ENCODE measurements at regions of chr5 and their contacts with region 1.

Region 1: DNA sequence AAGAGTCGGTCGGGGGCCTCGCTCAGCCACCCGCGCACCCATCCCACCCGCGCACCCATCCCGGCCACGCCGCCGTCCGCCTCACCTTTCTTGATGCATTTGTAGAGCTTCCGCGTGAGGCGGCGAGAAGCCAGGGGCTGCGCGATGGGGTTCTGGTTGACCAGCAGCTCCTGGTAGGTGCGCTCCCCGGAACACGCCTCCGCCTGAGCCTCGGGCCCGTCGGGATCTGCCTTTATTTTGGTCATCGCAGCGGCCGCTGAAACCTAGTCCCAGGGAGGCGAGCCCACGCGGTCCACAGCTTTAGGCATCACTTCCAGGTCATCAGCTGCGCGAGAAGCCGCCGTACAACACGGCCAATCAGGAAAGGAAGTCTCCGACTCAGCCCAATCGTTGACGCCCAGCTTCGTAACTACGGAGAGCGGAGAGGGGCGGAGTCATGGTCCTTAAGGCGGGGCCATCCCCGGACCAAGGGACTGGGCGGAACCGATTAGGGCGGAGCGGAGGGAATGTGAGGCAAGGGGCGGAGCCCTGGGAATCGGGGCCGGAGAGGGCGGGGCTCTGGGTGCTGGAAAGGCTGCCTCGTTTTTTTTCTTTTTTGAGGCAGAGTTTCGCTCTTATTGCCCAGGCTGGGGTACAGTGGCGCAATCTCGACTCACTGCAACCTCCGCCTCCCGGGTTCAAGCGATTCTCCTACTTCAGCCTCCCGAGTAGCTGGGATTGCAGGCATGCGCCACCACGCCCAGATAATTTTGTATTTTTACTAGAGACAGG is at the start of gene NHP2:
- DNase-seq: peak; percentile 99
- ATAC-seq: peak; percentile 96
- H3K4me3 Mint-ChIP-seq: peak within 1 kb of the TSS; percentile 94
- H3K27ac Mint-ChIP-seq: peak within 1 kb of the TSS; percentile 94
- H3K4me1 Mint-ChIP-seq: peaks cover 13% of the 10 kb centered on the region
- H3K27me3 Mint-ChIP-seq: no peaks in the 10 kb centered on the region
- CTCF ChIP-seq: no peak
- total RNA-seq, gene NHP2: 263 to 269 TPM (median 264 TPM) in 3 replicates

Region 2: DNA sequence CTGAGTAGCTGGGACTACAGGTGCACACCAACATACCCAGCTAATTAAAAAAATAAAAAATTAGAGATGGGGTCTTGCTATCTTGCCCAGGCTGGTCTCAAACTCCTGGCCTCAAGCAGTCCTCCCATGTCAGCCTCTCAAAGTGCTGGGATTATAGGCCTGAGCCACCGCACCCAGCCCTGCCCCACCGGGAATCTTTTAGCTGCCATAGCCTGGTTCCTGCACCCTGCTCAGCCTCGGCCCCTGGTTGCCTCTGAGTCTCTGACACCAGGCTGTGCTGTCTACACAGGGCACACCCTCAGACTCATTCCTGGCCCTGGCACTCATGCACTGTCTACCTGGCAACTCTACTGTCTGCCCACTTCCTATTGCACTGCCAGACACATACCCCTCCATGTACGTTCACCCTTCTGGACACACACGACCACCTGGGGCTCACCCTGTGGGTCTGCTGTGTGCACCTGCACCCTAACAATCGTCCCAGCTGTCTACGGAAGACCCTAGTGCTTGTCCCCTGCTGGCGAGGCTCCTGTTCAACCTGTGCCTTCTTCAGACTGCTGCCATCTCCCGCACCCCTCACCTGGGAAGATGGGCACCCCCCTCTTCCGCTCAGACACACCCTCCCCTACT is 159.1 kb before region 1 on chr5:
- CTCF ChIA-PET with region 1: no interaction called
- POLR2A ChIA-PET with region 1: no interaction called
- DNase-seq: no peak
- ATAC-seq: no peak
- H3K4me3 Mint-ChIP-seq: no peak overlapping the region
- H3K27ac Mint-ChIP-seq: no peak overlapping the region; the same call in 1 of the 2 replicates
- H3K4me1 Mint-ChIP-seq: peaks cover 13% of the 10 kb centered on the region
- H3K27me3 Mint-ChIP-seq: peaks cover 5% of the 10 kb centered on the region; the same call in 1 of the 2 replicates
- CTCF ChIP-seq: no peak

Region 3: GRCh38 chr5:178196986-178197385 is 43.2 kb after region 1 on chr5:
- CTCF ChIA-PET with region 1: interaction called, 5 read pairs
- POLR2A ChIA-PET with region 1: interaction called, 11 read pairs
- DNase-seq: peak; percentile 60
- ATAC-seq: peak; percentile 76
- H3K4me3 Mint-ChIP-seq: no peak overlapping the region
- H3K27ac Mint-ChIP-seq: no peak overlapping the region
- H3K4me1 Mint-ChIP-seq: peaks cover 23% of the 10 kb centered on the region
- H3K27me3 Mint-ChIP-seq: peaks cover 18% of the 10 kb centered on the region
- CTCF ChIP-seq: peak; percentile 44